ENCODE measurements at regions of chr21 and their contacts with region 1.

Region 1: DNA sequence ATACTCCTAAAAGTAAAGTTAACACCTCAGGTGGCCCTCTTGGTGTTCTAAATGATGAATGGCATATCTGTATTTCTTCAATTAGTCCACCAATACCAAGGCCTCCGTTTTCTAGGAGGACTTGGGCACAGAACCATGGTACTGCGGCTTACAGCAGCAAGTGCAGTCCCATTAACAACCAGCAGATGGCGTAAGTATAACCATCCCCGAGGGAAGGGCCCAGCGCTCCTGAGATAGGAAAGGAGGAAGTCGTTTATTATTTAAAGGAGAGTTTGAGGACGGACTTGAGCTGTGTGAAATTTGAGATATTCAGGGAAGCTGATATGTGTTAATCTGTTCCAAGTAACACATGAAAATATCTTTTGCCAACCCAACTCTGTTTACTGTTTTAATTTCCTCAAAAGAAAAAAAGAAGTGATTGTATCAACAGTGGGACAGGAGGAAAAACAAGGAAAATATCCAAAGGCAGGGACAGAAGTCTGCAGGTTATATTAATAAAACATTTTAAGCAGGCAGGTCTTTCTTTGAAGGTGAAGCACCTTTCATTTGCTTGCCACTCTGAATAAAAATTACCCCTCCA is 37.7 kb upstream of the KCNJ15 start:
- DNase-seq: peak; percentile 79
- ATAC-seq: peak; percentile 98
- H3K4me3 ChIP-seq: no peak overlapping the region
- H3K27ac ChIP-seq: no peak overlapping the region
- H3K4me1 ChIP-seq: no peaks in the 10 kb centered on the region
- H3K27me3 ChIP-seq: no peaks in the 10 kb centered on the region
- CTCF ChIP-seq: peak; percentile 91
- POLR2A ChIP-seq: no peak
- RAD21 ChIP-seq: peak; percentile 95

Region 2: DNA sequence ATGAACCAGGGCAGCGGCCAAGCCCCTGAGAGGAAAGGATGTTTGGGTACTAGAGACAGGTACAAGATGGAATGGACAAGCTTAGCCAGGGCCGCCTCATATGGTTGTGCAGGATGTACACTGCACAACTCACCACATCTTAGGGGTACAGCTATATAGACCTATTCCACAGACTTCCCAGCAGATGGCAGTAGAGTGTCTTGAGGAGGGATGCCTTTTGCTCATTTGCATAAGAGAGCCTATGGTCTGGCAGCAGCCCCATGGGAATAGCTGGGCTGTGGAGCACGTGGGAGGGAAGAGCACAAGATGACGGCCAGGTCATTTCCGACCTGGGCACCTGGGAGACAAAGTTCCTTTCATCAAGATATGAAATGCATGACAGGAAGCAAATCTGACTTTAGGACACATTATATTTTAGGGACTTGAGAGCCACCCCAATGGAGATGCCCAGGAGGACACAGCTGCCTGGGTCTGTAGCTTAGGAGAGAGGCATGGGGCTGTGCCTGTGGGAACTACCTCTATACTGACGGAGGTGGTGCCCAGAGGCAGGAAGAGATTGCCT is 518.4 kb before region 1 on chr21:
- CTCF ChIA-PET with region 1: interaction called, 3 read pairs
- POLR2A ChIA-PET with region 1: no interaction called
- dilution Hi-C with region 1: no loop called
- in situ Hi-C with region 1: no loop called
- intact Hi-C with region 1: loop called (anchors 5 kb)
- DNase-seq: peak; percentile 84
- ATAC-seq: peak; percentile 100
- H3K4me3 ChIP-seq: no peak overlapping the region
- H3K27ac ChIP-seq: no peak overlapping the region
- H3K4me1 ChIP-seq: no peaks in the 10 kb centered on the region
- H3K27me3 ChIP-seq: peaks cover 22% of the 10 kb centered on the region
- CTCF ChIP-seq: peak; percentile 78
- POLR2A ChIP-seq: no peak
- RAD21 ChIP-seq: peak; percentile 78

Region 3: DNA sequence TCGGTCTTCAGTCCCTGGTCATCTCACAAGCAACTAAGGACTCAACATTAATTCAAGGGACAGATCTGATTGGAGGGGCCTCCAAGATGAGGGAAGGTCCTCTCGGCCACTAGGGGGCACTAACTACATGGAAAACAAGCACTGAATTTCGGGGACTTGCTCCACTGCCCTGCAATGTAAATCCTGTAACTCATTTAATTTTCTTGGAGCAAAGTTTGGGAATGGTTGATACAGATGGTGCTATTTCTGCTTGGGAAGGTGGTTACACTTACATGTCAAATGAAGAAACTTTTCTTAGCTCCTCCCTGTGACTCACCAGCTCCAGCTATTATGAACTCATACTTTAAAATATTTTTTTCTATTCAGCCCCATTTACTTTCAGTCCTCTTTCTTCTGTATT is 59.8 kb before region 1 on chr21:
- CTCF ChIA-PET with region 1: no interaction called
- POLR2A ChIA-PET with region 1: no interaction called
- dilution Hi-C with region 1: no loop called
- in situ Hi-C with region 1: no loop called
- intact Hi-C with region 1: loop called (anchors 1 kb)
- DNase-seq: peak; percentile 84
- ATAC-seq: peak; percentile 95
- H3K4me3 ChIP-seq: no peak overlapping the region
- H3K27ac ChIP-seq: no peak overlapping the region
- H3K4me1 ChIP-seq: no peaks in the 10 kb centered on the region
- H3K27me3 ChIP-seq: peaks cover 14% of the 10 kb centered on the region
- CTCF ChIP-seq: peak; percentile 84
- POLR2A ChIP-seq: no peak
- RAD21 ChIP-seq: peak; percentile 82

Region 4: GRCh38 chr21:38170280-38170679 is 48.9 kb before region 1 on chr21:
- CTCF ChIA-PET with region 1: interaction called, 6 read pairs
- POLR2A ChIA-PET with region 1: no interaction called
- dilution Hi-C with region 1: no loop called
- in situ Hi-C with region 1: loop called (anchors 5 kb)
- intact Hi-C with region 1: loop called (anchors 5 kb)
- DNase-seq: peak; percentile 12
- ATAC-seq: no peak
- H3K4me3 ChIP-seq: no peak overlapping the region
- H3K27ac ChIP-seq: no peak overlapping the region; the same call in 1 of the 2 replicates
- H3K4me1 ChIP-seq: peaks cover 15% of the 10 kb centered on the region
- H3K27me3 ChIP-seq: peaks cover 4% of the 10 kb centered on the region; the same call in 1 of the 2 replicates
- CTCF ChIP-seq: peak; percentile 44
- POLR2A ChIP-seq: no peak
- RAD21 ChIP-seq: peak; percentile 62

Region 5: GRCh38 chr21:38333301-38334272 is 114.4 kb after region 1 on chr21:
- CTCF ChIA-PET with region 1: interaction called, 4 read pairs
- POLR2A ChIA-PET with region 1: no interaction called
- dilution Hi-C with region 1: no loop called
- in situ Hi-C with region 1: no loop called
- intact Hi-C with region 1: loop called (anchors 5 kb)
- DNase-seq: no peak
- ATAC-seq: peak; percentile 72
- H3K4me3 ChIP-seq: no peak overlapping the region
- H3K27ac ChIP-seq: no peak overlapping the region
- H3K4me1 ChIP-seq: no peaks in the 10 kb centered on the region
- H3K27me3 ChIP-seq: no peaks in the 10 kb centered on the region
- CTCF ChIP-seq: peak; percentile 42
- POLR2A ChIP-seq: no peak
- RAD21 ChIP-seq: peak; percentile 52

Region 6: DNA sequence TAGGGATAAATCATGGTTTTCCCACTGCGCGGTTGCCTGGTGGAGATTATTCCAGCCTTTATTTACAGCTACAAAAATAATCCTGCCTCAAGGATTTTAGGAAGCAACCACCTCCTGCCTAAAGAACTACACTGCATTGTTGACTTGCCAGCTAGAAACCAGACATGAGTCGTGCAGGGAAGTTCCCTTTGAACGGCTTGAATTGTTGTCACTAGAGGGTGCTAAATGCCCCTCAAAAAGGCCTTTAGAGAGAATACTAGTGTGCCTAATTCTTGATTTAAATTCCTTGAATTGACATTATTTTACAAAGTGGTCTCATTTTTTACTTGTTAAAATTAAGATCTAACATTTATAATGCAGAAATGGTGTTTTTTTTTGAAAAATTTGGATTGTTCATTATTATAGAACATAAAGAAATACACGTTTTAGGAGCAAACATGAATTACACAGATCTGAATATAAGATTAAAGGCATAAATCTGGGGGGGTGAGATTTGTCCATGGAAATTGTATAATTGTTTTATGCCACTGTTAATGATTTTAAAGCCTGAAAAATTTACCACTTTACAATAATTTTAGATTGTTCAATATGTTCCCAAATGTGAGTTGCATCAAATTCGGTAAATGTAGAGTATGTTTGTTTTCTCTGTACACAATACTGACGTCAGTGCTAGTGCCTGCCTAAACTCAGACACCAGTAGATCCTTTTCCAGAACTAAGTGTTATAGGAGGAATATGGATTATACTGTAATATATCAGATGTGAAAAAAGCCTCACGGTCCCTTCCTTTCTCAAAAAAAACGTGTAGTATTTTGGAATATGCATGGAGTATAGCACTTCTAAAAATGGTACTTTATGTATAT is 286.7 kb after region 1 on chr21:
- CTCF ChIA-PET with region 1: no interaction called
- POLR2A ChIA-PET with region 1: no interaction called
- dilution Hi-C with region 1: no loop called
- in situ Hi-C with region 1: no loop called
- intact Hi-C with region 1: no loop called
- DNase-seq: peak; percentile 71
- ATAC-seq: peak; percentile 96
- H3K4me3 ChIP-seq: no peak overlapping the region
- H3K27ac ChIP-seq: no peak overlapping the region
- H3K4me1 ChIP-seq: no peaks in the 10 kb centered on the region
- H3K27me3 ChIP-seq: peaks cover 24% of the 10 kb centered on the region
- CTCF ChIP-seq: peak; percentile 79
- POLR2A ChIP-seq: no peak
- RAD21 ChIP-seq: peak; percentile 81